Activated CD4-positive, alpha-beta T cell treated with anti-CD3 and anti-CD28 coated beads, Interleukin-2, amount 10 ng/mL, durations not matched to agents 24 days and 14 days (primary cell): ENCODE measurements at regions of chr1 and their contacts with region 1.

Region 1: DNA sequence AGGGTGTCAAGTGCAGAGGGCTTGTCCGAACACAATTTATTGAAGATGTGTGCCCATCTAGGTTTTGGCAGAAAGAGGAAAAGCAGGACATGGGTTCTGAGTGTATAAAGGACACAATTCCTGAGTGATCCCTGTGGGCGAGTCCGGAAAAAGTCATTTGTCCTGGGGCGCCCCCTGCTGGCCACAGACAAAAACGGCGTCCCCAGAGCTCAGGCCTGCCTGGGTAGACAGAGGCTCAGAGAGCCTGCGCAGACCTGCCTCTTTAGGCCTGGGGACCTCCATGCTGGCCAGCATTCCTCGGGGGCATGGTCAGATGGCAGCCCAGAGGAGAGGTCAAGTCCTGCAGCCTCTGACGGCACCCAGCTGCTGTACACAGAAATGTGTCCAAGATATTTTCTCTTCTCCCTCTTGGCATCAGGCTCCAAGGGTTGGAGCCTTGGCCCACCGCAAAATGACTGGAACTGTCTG is 65.5 kb upstream of the LRP8 start:
- DNase-seq: peak; percentile 92
- H3K4me3 Mint-ChIP-seq: no peak overlapping the region
- H3K27ac Mint-ChIP-seq: no peak overlapping the region
- H3K4me1 Mint-ChIP-seq: peaks cover 10% of the 10 kb centered on the region
- H3K27me3 Mint-ChIP-seq: peaks cover 16% of the 10 kb centered on the region

Region 2: DNA sequence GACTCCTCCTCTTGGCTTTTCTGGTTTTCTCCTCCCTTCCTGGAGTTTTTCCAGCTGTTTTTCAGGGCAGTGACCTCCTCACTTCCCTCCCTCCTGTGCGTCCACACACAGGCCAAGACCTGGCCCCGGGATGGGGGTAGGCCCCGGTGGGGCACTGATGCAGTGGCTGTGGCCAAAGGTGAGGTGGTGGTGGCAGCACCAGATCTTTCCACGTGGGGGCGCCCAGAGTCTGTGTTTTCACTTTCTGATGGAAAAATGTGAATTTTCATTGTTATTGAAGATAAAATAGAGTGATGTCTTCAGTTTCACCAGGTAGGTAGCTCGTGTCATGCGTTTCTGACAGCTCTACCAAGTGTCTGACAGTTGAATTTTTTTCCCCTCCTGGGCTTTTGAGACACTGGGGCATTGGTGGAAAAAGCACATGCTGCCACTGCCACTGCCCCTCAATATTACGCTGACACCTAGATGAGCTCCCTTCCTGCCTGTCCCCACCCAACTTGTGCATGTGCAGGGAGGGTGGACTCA is 115.1 kb before region 1 on chr1:
- intact Hi-C with region 1: loop called (anchors 1 kb)
- DNase-seq: peak; percentile 93
- H3K4me3 Mint-ChIP-seq: no peak overlapping the region
- H3K27ac Mint-ChIP-seq: peak overlapping the region; percentile 77
- H3K4me1 Mint-ChIP-seq: peaks cover 5% of the 10 kb centered on the region
- H3K27me3 Mint-ChIP-seq: no peaks in the 10 kb centered on the region

Region 3: DNA sequence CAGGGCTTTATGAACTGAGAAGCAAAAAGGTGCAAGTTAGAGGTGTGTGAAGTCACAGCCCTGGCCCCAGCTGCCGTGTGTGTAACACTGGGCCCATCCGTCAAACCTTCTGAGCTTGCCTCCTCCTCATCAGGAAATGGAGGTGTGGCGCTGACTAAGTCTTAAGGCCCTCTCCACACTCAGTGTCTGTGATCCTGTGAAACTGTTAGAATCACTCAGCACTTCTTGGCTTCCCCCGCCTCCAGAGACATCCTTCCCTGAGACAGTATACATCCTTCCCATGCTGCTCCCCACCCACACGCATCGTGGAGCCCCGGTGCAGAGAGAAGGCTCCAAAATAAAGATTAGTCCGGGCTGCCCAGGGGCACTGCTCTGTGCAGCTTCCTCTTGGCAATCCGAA is 98.8 kb before region 1 on chr1:
- intact Hi-C with region 1: loop called (anchors 5 kb)
- DNase-seq: peak; percentile 82
- H3K4me3 Mint-ChIP-seq: peak overlapping the region; percentile 44
- H3K27ac Mint-ChIP-seq: peak overlapping the region; percentile 88
- H3K4me1 Mint-ChIP-seq: peaks cover 41% of the 10 kb centered on the region
- H3K27me3 Mint-ChIP-seq: no peaks in the 10 kb centered on the region

Region 4: GRCh38 chr1:53413175-53414001 is 20.0 kb after region 1 on chr1:
- intact Hi-C with region 1: loop called (anchors 2 kb)
- DNase-seq: peak; percentile 91
- H3K4me3 Mint-ChIP-seq: peak overlapping the region; percentile 80
- H3K27ac Mint-ChIP-seq: peak overlapping the region; percentile 96
- H3K4me1 Mint-ChIP-seq: peaks cover 71% of the 10 kb centered on the region
- H3K27me3 Mint-ChIP-seq: no peaks in the 10 kb centered on the region

Region 5: DNA sequence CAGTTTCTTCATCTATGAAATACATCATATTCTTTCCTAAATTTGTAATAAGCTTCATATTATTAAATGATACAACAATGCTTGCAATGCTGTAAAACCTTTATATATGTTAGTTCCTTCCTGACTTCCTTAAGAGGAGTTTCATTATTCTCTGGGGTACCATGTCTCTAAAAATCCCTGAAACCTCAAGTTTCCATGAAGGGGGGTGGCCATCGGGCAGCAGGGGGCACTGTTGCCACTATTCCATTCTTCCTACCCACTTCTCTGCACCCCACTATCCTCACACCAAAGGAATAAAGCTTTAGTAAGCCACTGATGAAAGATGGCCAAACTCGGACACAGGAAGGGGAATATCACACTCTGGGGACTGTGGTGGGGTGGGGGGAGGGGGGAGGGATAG is 56.9 kb after region 1 on chr1:
- intact Hi-C with region 1: no loop called
- DNase-seq: no peak
- H3K4me3 Mint-ChIP-seq: no peak overlapping the region
- H3K27ac Mint-ChIP-seq: no peak overlapping the region
- H3K4me1 Mint-ChIP-seq: peaks cover 2% of the 10 kb centered on the region
- H3K27me3 Mint-ChIP-seq: peaks cover 43% of the 10 kb centered on the region